RWPE1 (cell line): ENCODE measurements at regions of chr14 and their contacts with region 1.

Region 1: GRCh38 chr14:55074662-55075061 is 23.2 kb downstream of the MAPK1IP1L start:
- DNase-seq: no peak
- H3K27ac ChIP-seq: no peak overlapping the region
- CTCF ChIP-seq: no peak

Region 2: GRCh38 chr14:55051426-55052268 is 23.0 kb before region 1 on chr14 and contains the start of gene MAPK1IP1L:
- CTCF ChIA-PET with region 1: interaction called, 10 read pairs
- POLR2A ChIA-PET with region 1: interaction called, 3 read pairs
- DNase-seq: peak; percentile 97
- H3K27ac ChIP-seq: peak within 1 kb of the TSS; percentile 98
- CTCF ChIP-seq: peak; percentile 99

Region 3: GRCh38 chr14:55094321-55095157 is 19.9 kb after region 1 on chr14:
- CTCF ChIA-PET with region 1: interaction called, 4 read pairs
- POLR2A ChIA-PET with region 1: interaction called, 16 read pairs
- DNase-seq: no peak
- H3K27ac ChIP-seq: no peak overlapping the region
- CTCF ChIP-seq: no peak